Right ventricle myocardium inferior (tissue), 1 donor: ENCODE measurements at regions of chr3 and their contacts with region 1.

Region 1: GRCh38 chr3:194270627-194271459 is 80.3 kb downstream of the CPN2 start:
- DNase-seq: peak; percentile 90
- ATAC-seq: peak; percentile 75

Region 2: GRCh38 chr3:194141415-194142155 is 129.3 kb before region 1 on chr3:
- intact Hi-C with region 1: loop called (anchors 1 kb)
- DNase-seq: peak; percentile 94
- ATAC-seq: peak; percentile 85

Region 3: DNA sequence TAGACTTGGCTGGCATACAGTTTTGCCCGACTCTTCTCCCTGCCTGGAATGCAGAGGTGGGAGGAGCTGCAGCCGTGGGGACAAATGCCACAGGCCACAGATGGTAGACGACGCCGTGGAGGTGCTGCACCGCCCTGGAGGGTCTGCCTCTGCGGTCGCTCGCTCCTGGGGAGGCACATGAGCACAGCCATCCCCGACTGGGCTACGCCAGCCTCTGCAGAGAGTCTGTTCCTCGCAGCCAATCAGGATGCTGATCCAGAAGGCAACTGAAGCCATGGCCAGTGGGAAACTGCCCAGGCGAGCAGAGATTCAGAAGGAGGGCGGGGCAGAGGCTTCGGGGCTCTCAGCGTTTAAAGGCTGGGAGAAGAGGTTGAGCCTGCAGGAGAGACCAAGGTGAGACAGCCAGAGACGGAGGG is 110.6 kb after region 1 on chr3:
- intact Hi-C with region 1: no loop called
- DNase-seq: no peak
- ATAC-seq: no peak